ENCODE measurements at regions of chr17 and their contacts with region 1.

Region 1: GRCh38 chr17:63189082-63189481 is 223.0 kb downstream of the TANC2 start:
- DNase-seq: no peak
- H3K4me3 ChIP-seq: no peak overlapping the region
- H3K27ac ChIP-seq: peak overlapping the region in 38 of 59 donors; percentile 4 to 94 (median 84)
- H3K27me3 ChIP-seq: no peaks in the 10 kb centered on the region
- CTCF ChIP-seq: no peak

Region 2: GRCh38 chr17:62703775-62704378 is 485.2 kb before region 1 on chr17:
- intact Hi-C with region 1: loop called in 1 of 2 experiments (anchors 10 kb)
- DNase-seq: peak in 9 of 10 donors; percentile 61 to 91 (median 73)
- H3K4me3 ChIP-seq: peak overlapping the region; percentile 48 to 94 (median 78)
- H3K27ac ChIP-seq: peak overlapping the region in 58 of 59 donors; percentile 52 to 95 (median 91)
- H3K27me3 ChIP-seq: no peaks in the 10 kb centered on the region
- CTCF ChIP-seq: peak; percentile 54 to 97 (median 84)

Region 3: GRCh38 chr17:62933501-62934385 is 255.3 kb before region 1 on chr17:
- intact Hi-C with region 1: no loop called
- DNase-seq: peak in 7 of 10 donors; percentile 13 to 54 (median 47)
- H3K4me3 ChIP-seq: peak overlapping the region in 3 of 59 donors; percentile 3 to 15 (median 15)
- H3K27ac ChIP-seq: no peak overlapping the region
- H3K27me3 ChIP-seq: no peaks in the 10 kb centered on the region
- CTCF ChIP-seq: no peak

Region 4: DNA sequence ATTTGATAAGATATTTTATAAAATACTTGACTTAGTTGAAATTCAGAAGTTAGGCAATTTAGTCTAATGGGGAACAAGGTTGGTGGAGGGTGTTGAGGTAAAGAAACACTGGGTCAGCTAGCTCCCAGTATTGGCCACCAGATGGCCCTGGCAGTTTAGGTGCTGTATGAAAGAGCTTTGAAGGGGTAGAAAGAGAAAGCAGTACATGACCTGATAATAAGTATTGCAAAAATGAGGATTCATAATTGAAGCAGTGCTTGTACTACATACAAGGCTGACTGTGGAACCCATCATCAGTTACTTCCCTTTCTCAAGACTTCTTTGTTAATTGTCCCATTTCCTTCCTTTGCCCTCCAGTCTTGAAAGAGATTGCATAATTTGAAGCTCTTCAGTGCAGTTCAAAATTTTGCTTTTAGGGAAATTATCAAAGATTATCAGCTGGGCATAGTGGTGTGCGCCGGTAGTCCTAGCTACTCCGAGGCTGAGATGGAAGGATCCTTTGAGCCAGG is 193.7 kb before region 1 on chr17:
- intact Hi-C with region 1: loop called in 1 of 2 experiments (anchors 10 kb)
- DNase-seq: peak in 2 of 10 donors; percentile 34 to 61
- H3K4me3 ChIP-seq: no peak overlapping the region
- H3K27ac ChIP-seq: peak overlapping the region in 1 of 59 donors; percentile 33
- H3K27me3 ChIP-seq: no peaks in the 10 kb centered on the region
- CTCF ChIP-seq: peak in 55 of 56 donors; percentile 32 to 78 (median 58)

Region 5: GRCh38 chr17:63086483-63087185 is 102.4 kb before region 1 on chr17:
- intact Hi-C with region 1: no loop called
- DNase-seq: no peak
- H3K4me3 ChIP-seq: no peak overlapping the region
- H3K27ac ChIP-seq: peak overlapping the region in 6 of 59 donors; percentile 5 to 42 (median 30)
- H3K27me3 ChIP-seq: no peaks in the 10 kb centered on the region
- CTCF ChIP-seq: no peak

Region 6: GRCh38 chr17:63113183-63113582 is 75.9 kb before region 1 on chr17:
- intact Hi-C with region 1: loop called (anchors 5 to 10 kb)
- DNase-seq: no peak
- H3K4me3 ChIP-seq: no peak overlapping the region
- H3K27ac ChIP-seq: no peak overlapping the region
- H3K27me3 ChIP-seq: no peaks in the 10 kb centered on the region
- CTCF ChIP-seq: peak in 54 of 56 donors; percentile 32 to 83 (median 60)

Region 7: DNA sequence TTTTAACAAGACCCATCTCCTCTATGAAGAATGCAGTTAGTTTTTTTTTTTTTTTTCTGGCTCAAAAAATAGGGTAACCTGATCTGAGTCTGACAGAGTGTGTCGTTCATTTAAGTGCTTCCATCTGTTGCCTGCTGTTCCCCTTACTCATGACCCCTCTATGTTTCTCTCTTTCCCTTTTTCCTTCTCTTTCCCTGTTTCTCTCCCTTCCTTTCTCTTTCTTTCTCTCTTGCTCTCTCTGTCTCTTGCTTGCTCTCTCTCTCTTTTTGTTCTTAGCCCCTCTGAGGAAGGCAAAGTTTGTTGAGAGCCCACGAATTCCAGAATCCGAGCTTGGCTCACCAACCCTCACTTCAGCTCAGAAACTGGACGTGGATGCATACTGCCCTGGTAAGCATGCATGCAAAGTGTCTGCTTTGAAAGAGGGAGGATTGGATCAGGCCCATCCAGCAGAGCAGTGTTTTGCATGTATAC is 38.1 kb before region 1 on chr17:
- intact Hi-C with region 1: loop called in 1 of 2 experiments (anchors 5 kb)
- DNase-seq: no peak
- H3K4me3 ChIP-seq: peak overlapping the region in 39 of 59 donors; percentile 1 to 58 (median 26)
- H3K27ac ChIP-seq: peak overlapping the region in 54 of 59 donors; percentile 4 to 92 (median 77)
- H3K27me3 ChIP-seq: no peaks in the 10 kb centered on the region
- CTCF ChIP-seq: no peak

Measured in dorsolateral prefrontal cortex (tissue), 120 donors.